ENCODE measurements at regions of chr2 and their contacts with region 1.

Region 1: GRCh38 chr2:39216346-39217191 is 27.2 kb downstream of the CDKL4 start:
- DNase-seq: peak; percentile 87 to 92 (median 89)
- H3K4me3 ChIP-seq: peak overlapping the region in 1 of 2 donors; percentile 25
- H3K4me3 Mint-ChIP-seq: peak overlapping the region; percentile 36 to 72 (median 63)
- H3K27ac ChIP-seq: peak overlapping the region; percentile 65
- H3K27ac Mint-ChIP-seq: peak overlapping the region; percentile 63 to 96 (median 91)
- H3K4me1 ChIP-seq: peaks cover 58% of the 10 kb centered on the region
- H3K4me1 Mint-ChIP-seq: peaks cover 38 to 60% (median 52%) of the 10 kb centered on the region in 4 donors
- H3K27me3 ChIP-seq: no peaks in the 10 kb centered on the region
- H3K27me3 Mint-ChIP-seq: no peaks in the 10 kb centered on the region

Region 2: DNA sequence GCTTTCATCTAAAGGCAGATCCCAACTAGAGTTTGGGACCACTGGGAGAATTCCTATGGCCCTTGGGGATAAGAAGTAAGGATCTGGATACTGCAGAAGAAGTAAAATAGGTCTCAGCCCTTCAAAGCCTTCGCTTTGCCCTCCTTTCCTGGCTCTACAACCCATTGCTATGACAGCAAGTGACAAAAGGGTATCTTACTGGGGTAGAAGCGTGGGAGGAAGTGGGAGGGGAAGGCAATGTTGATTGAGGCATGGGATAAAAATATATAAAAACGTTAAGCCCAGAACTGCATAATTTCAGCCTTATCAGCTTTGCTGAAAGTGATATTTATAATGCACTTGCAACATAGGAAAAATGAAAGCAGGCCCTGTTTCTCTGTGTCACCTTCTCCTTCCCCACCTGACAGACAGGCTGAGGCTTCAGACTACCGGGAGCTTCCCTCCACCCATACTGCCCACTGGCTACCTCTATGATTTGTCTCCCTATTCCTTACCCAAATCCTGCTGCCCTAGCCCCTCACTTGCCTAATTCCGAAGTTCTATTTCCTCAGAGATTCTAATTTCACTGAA is 80.8 kb before region 1 on chr2:
- CTCF ChIA-PET with region 1: interaction called, 3 read pairs
- POLR2A ChIA-PET with region 1: interaction called, 185 read pairs
- intact Hi-C with region 1: no loop called
- DNase-seq: no peak
- H3K4me3 ChIP-seq: no peak overlapping the region
- H3K4me3 Mint-ChIP-seq: peak overlapping the region; percentile 57 to 85 (median 72)
- H3K27ac ChIP-seq: peak overlapping the region; percentile 25
- H3K27ac Mint-ChIP-seq: peak overlapping the region; percentile 73 to 96 (median 88)
- H3K4me1 ChIP-seq: peaks cover 65% of the 10 kb centered on the region
- H3K4me1 Mint-ChIP-seq: peaks cover 35 to 74% (median 54%) of the 10 kb centered on the region in 4 donors
- H3K27me3 ChIP-seq: no peaks in the 10 kb centered on the region
- H3K27me3 Mint-ChIP-seq: no peaks in the 10 kb centered on the region

Region 3: DNA sequence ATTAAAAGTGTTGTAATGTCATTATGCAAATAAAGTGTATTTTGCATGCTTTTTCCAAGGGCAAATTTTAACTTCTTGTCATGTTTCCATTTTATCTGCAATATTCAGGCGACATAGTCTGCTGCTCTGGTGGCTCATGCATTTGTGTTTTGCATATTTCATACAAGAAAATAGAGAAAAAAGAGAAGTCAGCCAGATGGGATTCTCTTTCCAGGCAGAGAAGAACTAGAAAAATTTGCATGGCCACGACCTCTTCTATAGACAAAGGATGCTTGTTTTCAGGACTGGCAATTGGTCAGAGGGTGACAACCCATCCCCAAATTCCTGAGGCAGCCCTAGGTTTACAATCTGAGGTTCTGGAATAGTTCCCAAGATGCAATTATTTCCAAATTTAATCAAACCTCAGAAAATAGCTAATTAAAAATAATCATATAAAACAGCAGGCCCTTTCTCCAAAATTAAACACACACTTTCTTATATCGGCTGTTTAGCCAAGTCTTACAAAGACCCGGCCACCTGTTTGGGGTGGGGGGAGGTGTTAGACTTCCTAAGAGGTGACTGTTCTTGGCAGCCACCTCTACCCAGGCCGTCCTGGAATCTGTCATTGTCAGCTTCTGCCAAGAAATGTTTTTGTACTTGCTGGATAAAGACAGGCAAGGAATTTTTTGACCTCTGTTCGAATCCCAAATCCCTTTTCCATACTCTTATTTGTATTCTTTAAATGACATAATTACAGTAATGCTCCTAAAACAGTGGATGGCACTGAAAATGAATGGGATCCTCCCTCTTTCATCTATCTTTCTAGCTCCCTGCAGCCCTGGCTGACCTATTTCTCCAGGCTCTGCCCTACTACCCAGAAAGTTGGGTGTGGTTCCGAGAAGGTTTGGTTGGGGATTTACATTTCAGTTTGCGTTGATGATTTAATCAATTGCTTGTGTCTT is 75.0 kb before region 1 on chr2:
- CTCF ChIA-PET with region 1: no interaction called
- POLR2A ChIA-PET with region 1: interaction called, 21 read pairs
- intact Hi-C with region 1: no loop called
- DNase-seq: peak in 4 of 5 donors; percentile 18 to 57 (median 46)
- H3K4me3 ChIP-seq: no peak overlapping the region
- H3K4me3 Mint-ChIP-seq: peak overlapping the region in 7 of 8 donors; percentile 47 to 75 (median 61)
- H3K27ac ChIP-seq: peak overlapping the region; percentile 29
- H3K27ac Mint-ChIP-seq: peak overlapping the region; percentile 62 to 93 (median 88)
- H3K4me1 ChIP-seq: peaks cover 69% of the 10 kb centered on the region
- H3K4me1 Mint-ChIP-seq: peaks cover 35 to 66% (median 50%) of the 10 kb centered on the region in 4 donors
- H3K27me3 ChIP-seq: no peaks in the 10 kb centered on the region
- H3K27me3 Mint-ChIP-seq: no peaks in the 10 kb centered on the region

Region 4: GRCh38 chr2:39202639-39203369 is 13.8 kb before region 1 on chr2:
- CTCF ChIA-PET with region 1: no interaction called
- POLR2A ChIA-PET with region 1: interaction called, 15 read pairs
- intact Hi-C with region 1: no loop called
- DNase-seq: no peak
- H3K4me3 ChIP-seq: no peak overlapping the region
- H3K4me3 Mint-ChIP-seq: no peak overlapping the region
- H3K27ac ChIP-seq: no peak overlapping the region
- H3K27ac Mint-ChIP-seq: peak overlapping the region in 3 of 7 donors; percentile 1 to 39 (median 38)
- H3K4me1 ChIP-seq: no peaks in the 10 kb centered on the region
- H3K4me1 Mint-ChIP-seq: peaks cover 3 to 12% (median 7%) of the 10 kb centered on the region in 4 donors
- H3K27me3 ChIP-seq: no peaks in the 10 kb centered on the region
- H3K27me3 Mint-ChIP-seq: no peaks in the 10 kb centered on the region